A673 (cell line): ENCODE measurements at regions of chr16 and their contacts with region 1.

Region 1: DNA sequence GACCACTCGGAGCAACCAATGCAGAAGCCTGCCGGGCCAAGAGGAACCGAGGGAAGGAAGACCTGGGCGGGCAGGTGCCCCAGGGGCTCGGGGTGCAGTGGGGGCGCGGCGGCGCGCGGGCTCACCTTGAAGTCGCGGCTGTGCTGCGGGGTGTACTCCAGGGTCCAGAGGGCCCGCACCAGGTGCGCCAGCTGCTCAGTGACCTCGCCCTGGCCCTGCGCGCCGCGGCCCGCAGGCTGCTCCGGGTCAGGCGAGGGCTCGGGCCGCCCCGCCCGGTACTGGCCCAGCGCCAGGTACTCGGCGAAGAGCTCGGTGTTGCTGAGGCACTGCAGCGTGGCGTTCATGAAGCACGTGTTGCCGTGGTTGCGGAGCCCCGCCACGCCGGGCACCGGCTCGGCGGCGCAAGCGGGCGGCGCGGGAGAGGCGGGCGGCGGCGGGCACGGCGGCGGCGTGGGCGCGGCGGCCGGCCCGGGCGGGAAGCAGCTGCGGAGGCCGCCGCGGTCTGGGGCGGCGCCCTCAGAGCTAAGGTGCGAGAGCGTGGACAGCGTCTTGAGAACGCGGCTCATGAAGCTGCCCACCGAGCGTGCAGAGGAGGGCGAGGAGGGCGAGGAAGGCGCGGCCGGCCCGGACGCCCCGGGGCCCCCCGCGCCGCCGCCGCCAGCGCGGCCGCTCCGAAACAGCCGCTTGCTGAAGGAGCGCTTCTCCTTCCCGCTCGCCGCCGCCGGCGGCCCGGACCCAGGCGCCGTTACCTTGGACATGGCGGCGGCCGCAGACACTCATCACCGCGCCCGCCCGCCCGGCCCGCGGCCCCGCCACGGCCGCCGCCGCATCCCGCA is 521 bp downstream of the USP31 start:
- DNase-seq: peak; percentile 54
- H3K4me3 ChIP-seq: peak overlapping the region; percentile 75
- H3K27ac ChIP-seq: peak overlapping the region; percentile 67
- H3K4me1 ChIP-seq: peaks cover 43% of the 10 kb centered on the region
- H3K27me3 ChIP-seq: no peaks in the 10 kb centered on the region
- CTCF ChIP-seq: no peak

Region 2: DNA sequence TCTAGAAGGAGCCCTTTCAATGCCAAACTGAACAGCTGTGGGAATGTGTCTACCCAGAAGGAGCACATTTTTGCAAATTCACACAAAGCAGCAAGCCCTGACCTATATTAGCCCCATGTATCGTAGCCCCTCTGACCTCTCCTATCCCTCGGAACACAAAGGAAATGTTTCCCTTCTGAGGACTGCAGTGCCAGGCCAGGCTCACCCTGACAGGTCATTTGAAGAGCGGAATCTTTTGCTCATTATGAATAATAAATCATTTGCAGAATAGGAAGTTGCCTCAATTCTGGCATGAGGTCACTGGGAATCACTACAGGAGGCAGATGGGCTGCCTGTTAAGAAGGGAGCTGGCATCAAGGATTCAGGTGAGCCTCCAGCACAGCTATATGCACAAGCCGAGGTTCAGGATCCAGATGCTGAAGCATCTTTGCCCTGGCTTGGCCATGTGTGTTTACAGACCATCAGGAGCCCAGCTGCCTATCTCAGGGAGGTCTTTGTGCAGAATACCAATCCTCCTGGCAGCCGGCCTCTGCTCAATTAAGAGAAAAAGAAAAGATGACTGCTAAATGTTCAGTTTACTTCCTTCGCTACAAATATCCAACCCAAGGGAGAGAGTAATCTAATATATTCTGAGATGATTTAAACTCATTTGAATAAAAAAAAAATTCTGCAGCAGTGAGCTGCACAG is 118.9 kb before region 1 on chr16:
- CTCF ChIA-PET with region 1: no interaction called
- POLR2A ChIA-PET with region 1: no interaction called
- intact Hi-C with region 1: no loop called
- DNase-seq: no peak
- H3K4me3 ChIP-seq: no peak overlapping the region
- H3K27ac ChIP-seq: no peak overlapping the region
- H3K4me1 ChIP-seq: no peaks in the 10 kb centered on the region
- H3K27me3 ChIP-seq: peaks cover 33% of the 10 kb centered on the region
- CTCF ChIP-seq: no peak

Region 3: GRCh38 chr16:23131931-23132621 is 16.7 kb before region 1 on chr16:
- CTCF ChIA-PET with region 1: no interaction called
- POLR2A ChIA-PET with region 1: interaction called, 10 read pairs
- intact Hi-C with region 1: no loop called
- DNase-seq: no peak
- H3K4me3 ChIP-seq: peak overlapping the region; percentile 32
- H3K27ac ChIP-seq: peak overlapping the region; percentile 77
- H3K4me1 ChIP-seq: peaks cover 49% of the 10 kb centered on the region
- H3K27me3 ChIP-seq: no peaks in the 10 kb centered on the region
- CTCF ChIP-seq: no peak